IMR-90 (cell line): ENCODE measurements at regions of chr7 and their contacts with region 1.

Region 1: GRCh38 chr7:6272481-6273323 is at the start of gene CYTH3:
- DNase-seq: peak; percentile 71
- ATAC-seq: peak; percentile 96
- H3K4me3 ChIP-seq: peak within 1 kb of the TSS; percentile 95
- H3K27ac ChIP-seq: peak within 1 kb of the TSS; percentile 75
- H3K4me1 ChIP-seq: peaks cover 14% of the 10 kb centered on the region
- H3K27me3 ChIP-seq: no peaks in the 10 kb centered on the region
- CTCF ChIP-seq: no peak
- POLR2A ChIP-seq: no peak
- RAD21 ChIP-seq: 0 out of 2 replicates have a peak, but pooled peaks have one; percentile 11
- total RNA-seq, gene CYTH3: 14.2 TPM in 2 replicates

Region 2: GRCh38 chr7:6306471-6306870 is 33.8 kb after region 1 on chr7:
- CTCF ChIA-PET with region 1: no interaction called
- POLR2A ChIA-PET with region 1: no interaction called
- dilution Hi-C with region 1: no loop called
- in situ Hi-C with region 1: no loop called
- intact Hi-C with region 1: no loop called
- DNase-seq: peak; percentile 74
- ATAC-seq: peak; percentile 73
- H3K4me3 ChIP-seq: no peak overlapping the region
- H3K27ac ChIP-seq: no peak overlapping the region
- H3K4me1 ChIP-seq: peaks cover 6% of the 10 kb centered on the region
- H3K27me3 ChIP-seq: no peaks in the 10 kb centered on the region
- CTCF ChIP-seq: no peak
- POLR2A ChIP-seq: no peak
- RAD21 ChIP-seq: no peak

Region 3: GRCh38 chr7:6323967-6324701 is 51.4 kb after region 1 on chr7:
- CTCF ChIA-PET with region 1: no interaction called
- POLR2A ChIA-PET with region 1: no interaction called
- dilution Hi-C with region 1: no loop called
- in situ Hi-C with region 1: no loop called
- intact Hi-C with region 1: loop called (anchors 2 kb)
- DNase-seq: no peak
- ATAC-seq: no peak
- H3K4me3 ChIP-seq: no peak overlapping the region
- H3K27ac ChIP-seq: no peak overlapping the region
- H3K4me1 ChIP-seq: no peaks in the 10 kb centered on the region
- H3K27me3 ChIP-seq: no peaks in the 10 kb centered on the region
- CTCF ChIP-seq: no peak
- POLR2A ChIP-seq: no peak
- RAD21 ChIP-seq: no peak